ENCODE measurements at regions of chr20 and their contacts with region 1.

Region 1: GRCh38 chr20:62182613-62183425 is at the start of gene MTG2:
- DNase-seq: peak; percentile 97 to 99
- ATAC-seq: peak; percentile 97
- H3K4me3 ChIP-seq: peak within 1 kb of the TSS; percentile 56 to 91
- H3K27ac ChIP-seq: peak within 1 kb of the TSS; percentile 49 to 55
- H3K4me1 ChIP-seq: peaks cover 0 to 3% of the 10 kb centered on the region in 2 donors
- H3K27me3 ChIP-seq: no peaks in the 10 kb centered on the region
- total RNA-seq, gene MTG2: 24.6 to 33.3 TPM

Region 2: DNA sequence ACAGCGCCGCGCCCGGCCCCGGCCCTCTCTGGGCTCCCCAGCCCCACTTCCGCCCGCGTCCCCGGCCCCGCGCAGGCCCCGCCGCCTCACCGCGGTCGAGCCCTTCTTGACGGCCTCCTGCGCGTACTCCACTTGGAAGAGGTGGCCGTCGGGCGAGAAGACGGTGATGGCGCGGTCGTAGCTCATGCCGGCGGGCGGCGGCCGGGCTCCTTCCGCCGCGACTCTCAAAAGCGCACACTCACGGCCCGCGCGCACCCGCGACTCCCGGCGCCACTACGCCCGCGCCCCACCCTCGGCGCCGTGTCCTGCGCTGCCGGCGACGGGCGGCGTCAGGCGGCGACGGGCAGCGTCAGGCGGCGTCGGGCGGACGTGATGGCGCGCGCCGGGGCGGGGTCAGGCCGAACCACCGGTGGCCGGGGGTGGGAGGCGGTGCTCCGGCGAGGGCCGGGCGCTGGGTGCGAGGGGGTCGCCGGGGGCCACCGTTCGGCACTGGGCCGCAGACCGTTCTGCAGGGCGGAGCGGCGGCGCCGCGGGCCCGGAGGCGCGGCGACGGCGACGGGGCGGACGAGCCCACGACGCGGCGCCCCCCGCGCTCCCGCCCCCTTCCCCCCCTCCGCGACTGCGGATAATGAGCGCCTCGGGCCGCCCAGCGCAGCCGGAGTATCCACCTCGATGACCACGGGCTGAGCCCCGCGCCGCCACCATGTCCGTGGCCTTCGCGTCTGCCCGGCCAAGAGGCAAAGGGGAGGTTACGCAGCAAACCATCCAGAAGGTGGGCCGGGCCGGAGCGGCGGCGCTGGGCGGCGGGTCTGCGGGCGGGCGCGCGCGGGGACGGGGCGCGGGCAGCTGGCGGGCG is 39.5 kb before region 1 on chr20 and contains the starts of genes PSMA7 and SS18L1:
- intact Hi-C with region 1: loop called in 1 of 2 experiments (anchors 5 kb)
- DNase-seq: peak; percentile 92 to 95
- ATAC-seq: peak; percentile 94
- H3K4me3 ChIP-seq: peak within 1 kb of the TSS; percentile 96 to 98
- H3K27ac ChIP-seq: peak within 1 kb of the TSS; percentile 84 to 93
- H3K4me1 ChIP-seq: no peaks in the 10 kb centered on the region
- H3K27me3 ChIP-seq: no peaks in the 10 kb centered on the region
- total RNA-seq, gene PSMA7: 136 to 176 TPM
- total RNA-seq, gene SS18L1: 12.1 to 19.1 TPM

Region 3: DNA sequence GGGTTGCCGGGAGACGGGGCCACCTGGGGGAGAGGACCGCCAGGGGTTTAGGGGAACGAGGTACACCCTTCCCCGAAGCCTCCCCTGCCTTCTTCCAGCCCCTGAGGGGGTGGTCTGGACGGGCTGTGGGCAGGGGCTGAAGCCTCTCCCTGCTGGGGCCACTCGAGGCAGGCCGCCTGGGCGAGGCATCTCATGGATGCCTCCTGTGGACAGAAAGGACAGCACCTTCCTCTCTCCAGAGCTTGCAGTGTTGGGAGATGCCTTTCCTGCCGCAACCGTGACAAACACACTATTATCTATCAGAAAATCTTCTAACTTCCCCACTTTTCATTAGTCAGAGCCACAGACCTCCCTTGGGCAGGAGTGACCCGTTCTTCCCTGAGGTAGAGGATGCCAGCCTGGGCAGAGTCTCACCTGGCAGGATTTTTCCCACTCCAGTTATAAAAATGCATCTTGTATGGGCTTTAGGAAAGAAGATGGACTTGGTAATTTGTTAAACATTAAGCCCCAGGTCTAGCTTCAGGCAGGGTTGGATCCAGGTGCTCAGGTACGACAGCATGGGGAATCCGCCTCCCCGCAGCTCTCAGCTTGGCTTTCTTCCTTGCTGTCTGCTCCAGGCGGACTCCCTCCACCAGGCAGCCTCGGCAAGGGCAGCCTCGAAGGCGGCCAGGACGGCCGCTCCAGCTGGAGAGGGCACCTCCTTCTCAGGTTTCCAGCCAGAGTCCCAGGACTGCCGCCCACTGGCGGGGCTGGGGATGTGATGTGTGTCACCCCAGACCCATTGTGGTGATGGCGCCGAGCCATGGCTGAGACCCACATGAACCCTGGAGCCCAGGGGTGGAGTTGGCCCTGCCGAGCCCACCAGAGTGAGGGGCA is 26.3 kb after region 1 on chr20:
- intact Hi-C with region 1: no loop called
- DNase-seq: no peak
- ATAC-seq: no peak
- H3K4me3 ChIP-seq: no peak overlapping the region
- H3K27ac ChIP-seq: no peak overlapping the region
- H3K4me1 ChIP-seq: no peaks in the 10 kb centered on the region
- H3K27me3 ChIP-seq: no peaks in the 10 kb centered on the region

Region 4: DNA sequence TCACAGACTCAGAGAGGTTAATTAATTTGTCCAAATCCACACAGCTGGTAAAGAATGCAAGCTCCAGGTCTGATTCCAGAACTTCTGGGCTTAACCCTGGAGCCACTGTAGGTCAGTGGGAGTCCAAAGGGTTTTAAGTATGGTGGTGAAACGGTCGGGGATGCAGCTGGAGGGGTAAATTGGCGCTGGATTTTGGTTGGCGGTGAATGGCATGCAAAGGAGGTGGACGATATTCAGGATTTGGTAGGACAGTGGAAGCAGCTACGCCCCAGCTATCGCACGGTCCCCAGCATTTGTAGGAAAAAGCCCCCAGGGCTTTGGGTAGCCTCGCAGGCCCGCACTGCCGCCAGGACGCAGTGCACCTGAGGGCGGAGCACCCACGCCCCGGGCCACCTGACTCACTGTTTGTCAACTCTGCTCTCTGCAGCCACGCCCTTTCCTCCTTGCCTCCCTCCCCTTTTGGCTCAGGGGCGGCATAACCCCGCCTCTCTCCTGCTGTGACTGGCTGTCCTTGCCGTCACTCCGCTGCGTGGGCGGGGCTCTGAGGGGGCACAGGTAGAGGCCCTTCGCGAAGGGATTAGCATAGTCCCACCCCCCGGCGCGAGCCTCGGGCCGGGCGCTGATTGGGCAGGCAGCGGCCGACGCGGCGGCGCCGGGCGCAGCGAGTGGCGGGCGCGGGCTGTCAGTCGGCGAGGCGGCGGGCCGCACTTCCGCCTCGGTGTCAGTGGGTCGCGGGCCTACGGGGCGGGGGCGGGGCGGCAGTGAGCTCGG is 55.2 kb after region 1 on chr20 and contains the start of gene OSBPL2:
- intact Hi-C with region 1: loop called in 1 of 2 experiments (anchors 2 kb)
- DNase-seq: peak; percentile 99
- ATAC-seq: peak; percentile 100
- H3K4me3 ChIP-seq: peak within 1 kb of the TSS; percentile 90 to 93
- H3K27ac ChIP-seq: peak within 1 kb of the TSS; percentile 20 to 79
- H3K4me1 ChIP-seq: no peaks in the 10 kb centered on the region
- H3K27me3 ChIP-seq: no peaks in the 10 kb centered on the region
- total RNA-seq, gene OSBPL2: 58.0 to 71.3 TPM

Region 5: DNA sequence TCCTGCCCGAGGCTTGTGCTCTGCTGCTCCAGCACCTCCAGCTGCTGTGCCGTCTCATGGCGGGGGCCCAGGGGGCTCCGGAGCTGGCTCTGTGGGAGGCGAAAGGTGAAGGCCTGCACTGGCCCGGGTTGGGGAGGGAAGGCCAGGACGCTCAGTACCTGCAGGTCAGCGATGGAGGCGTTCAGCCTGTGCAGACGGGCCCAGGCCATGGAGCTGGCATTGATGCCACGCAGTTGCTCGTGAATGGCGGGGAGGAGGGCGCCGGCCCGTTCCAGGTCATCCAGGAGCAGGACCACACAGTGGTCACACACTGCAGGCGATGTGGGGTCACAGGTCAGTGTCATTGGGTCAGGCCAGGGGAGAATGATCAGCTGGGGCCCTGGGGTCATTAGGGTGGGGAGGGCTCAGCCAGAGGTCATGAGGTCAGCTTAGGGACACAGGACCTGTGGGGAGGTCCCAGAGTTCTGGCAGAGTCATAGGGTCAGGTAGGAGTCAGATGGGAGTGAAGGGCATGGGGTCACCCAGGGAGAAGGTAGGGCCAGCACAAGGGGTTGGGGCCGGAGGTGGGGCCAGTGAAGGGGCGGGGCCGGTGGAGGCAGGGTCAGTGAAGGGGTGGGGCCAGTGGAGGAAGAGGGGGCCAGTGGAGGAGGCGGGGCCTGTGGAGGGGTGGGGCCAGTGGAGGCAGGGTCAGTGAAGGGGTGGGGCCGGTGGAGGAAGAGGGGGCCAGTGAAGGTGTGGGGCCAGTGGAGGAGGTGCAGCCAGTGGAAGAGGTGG is 137.9 kb after region 1 on chr20:
- intact Hi-C with region 1: no loop called
- DNase-seq: no peak
- ATAC-seq: no peak
- H3K4me3 ChIP-seq: no peak overlapping the region
- H3K27ac ChIP-seq: no peak overlapping the region
- H3K4me1 ChIP-seq: no peaks in the 10 kb centered on the region
- H3K27me3 ChIP-seq: no peaks in the 10 kb centered on the region

Region 6: GRCh38 chr20:62376112-62377063 is 193.6 kb after region 1 on chr20:
- intact Hi-C with region 1: loop called in 1 of 2 experiments (anchors 10 kb)
- DNase-seq: peak in 1 of 2 donors; percentile 80
- ATAC-seq: peak; percentile 75
- H3K4me3 ChIP-seq: no peak overlapping the region
- H3K27ac ChIP-seq: peak overlapping the region in 1 of 2 donors; percentile 70
- H3K4me1 ChIP-seq: no peaks in the 10 kb centered on the region
- H3K27me3 ChIP-seq: no peaks in the 10 kb centered on the region

Measured in aorta (tissue), 5 donors.